Transverse colon (tissue), 4 donors: ENCODE measurements at regions of chr6 and their contacts with region 1.

Region 1: GRCh38 chr6:127464881-127465459 is 5.8 kb upstream of the KIAA0408 start:
- DNase-seq: peak; percentile 68
- H3K4me3 ChIP-seq: no peak overlapping the region
- H3K27ac ChIP-seq: peak overlapping the region in 3 of 4 donors; percentile 51 to 73 (median 70)
- H3K4me1 ChIP-seq: peaks cover 0 to 12% (median 0%) of the 10 kb centered on the region in 4 donors
- H3K27me3 ChIP-seq: no peaks in the 10 kb centered on the region
- CTCF ChIP-seq: peak; percentile 67 to 80 (median 78)
- EP300 ChIP-seq: no peak
- POLR2A ChIP-seq: no peak

Region 2: DNA sequence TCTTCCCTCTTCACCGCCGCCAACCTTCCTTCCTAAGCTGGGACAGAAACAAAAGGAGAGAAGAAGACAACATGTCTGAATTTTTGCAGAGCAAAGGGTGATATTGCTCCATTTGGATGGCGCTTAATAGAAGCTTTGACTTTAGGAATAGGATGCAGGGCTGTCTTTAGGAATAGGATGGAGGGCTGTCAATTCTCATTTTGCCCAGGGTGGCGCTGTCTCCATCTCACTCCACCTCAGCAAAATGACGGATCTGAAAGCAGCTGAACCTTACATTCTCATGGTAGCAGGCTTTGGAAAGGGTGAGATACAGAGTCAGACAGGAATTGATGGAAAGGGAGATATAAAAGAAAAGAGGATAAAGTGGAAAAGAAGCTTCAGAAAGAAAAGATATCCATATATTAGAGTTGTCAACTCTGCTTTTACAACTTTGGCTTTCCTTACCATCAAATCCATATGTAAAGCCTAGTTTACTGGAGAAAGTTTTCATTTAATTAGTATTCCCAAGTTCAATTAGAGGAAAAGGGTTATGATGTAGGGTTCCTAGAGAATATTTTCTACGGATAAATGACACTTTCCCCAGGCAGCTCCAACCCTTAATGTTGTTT is 51.8 kb after region 1 on chr6:
- in situ Hi-C with region 1: no loop called
- intact Hi-C with region 1: loop called (anchors 10 kb)
- DNase-seq: peak; percentile 20
- H3K4me3 ChIP-seq: peak overlapping the region; percentile 46 to 76 (median 50)
- H3K27ac ChIP-seq: peak overlapping the region in 1 of 4 donors; percentile 32
- H3K4me1 ChIP-seq: peaks cover 5 to 40% (median 22%) of the 10 kb centered on the region in 4 donors
- H3K27me3 ChIP-seq: peaks cover 87% of the 10 kb centered on the region
- CTCF ChIP-seq: peak; percentile 48 to 61 (median 57)
- EP300 ChIP-seq: no peak
- POLR2A ChIP-seq: no peak

Region 3: DNA sequence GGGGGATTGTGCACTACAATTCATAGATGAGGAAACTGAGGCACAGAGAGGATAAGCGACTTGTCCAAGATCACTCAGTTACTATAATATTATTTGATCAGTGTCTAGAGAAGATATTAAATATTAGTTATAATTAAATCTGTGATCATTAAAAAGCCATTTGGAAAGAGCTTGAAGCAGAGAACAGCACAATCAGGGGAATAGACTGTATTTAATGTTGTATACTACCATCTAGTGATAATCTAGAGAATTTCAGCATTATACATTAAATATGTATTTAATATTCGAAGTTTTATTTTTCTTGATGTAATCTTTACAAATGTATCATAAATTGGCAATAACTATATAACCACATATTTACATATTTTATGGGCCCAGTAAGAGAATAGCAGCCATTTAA is 74.3 kb after region 1 on chr6:
- in situ Hi-C with region 1: loop called in 1 of 4 experiments (anchors 5 kb)
- intact Hi-C with region 1: no loop called
- DNase-seq: no peak
- H3K4me3 ChIP-seq: no peak overlapping the region
- H3K27ac ChIP-seq: no peak overlapping the region
- H3K4me1 ChIP-seq: no peaks in the 10 kb centered on the region
- H3K27me3 ChIP-seq: no peaks in the 10 kb centered on the region
- CTCF ChIP-seq: peak; percentile 35 to 43 (median 37)
- EP300 ChIP-seq: no peak
- POLR2A ChIP-seq: no peak

Region 4: DNA sequence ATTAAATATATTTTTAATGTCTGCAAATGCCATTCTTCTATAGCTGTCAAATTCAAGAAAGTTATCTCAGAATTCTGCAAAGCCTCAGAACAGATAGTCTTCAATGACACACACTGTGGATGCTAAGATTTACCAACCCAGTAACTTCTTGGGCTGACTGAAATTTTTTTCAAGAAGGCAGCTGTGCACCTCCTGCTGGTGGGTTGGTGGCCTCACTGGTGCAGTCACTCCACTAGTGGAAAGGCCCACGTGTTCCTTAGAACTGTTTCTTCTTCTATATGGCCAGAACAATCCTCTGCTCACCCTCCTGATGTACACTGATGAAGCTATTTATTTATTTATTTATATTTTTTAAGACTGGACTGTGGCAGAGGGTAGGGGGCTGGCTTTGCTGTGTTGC is 82.2 kb after region 1 on chr6:
- in situ Hi-C with region 1: loop called in 1 of 4 experiments (anchors 5 kb)
- intact Hi-C with region 1: no loop called
- DNase-seq: no peak
- H3K4me3 ChIP-seq: no peak overlapping the region
- H3K27ac ChIP-seq: no peak overlapping the region
- H3K4me1 ChIP-seq: no peaks in the 10 kb centered on the region
- H3K27me3 ChIP-seq: peaks cover 3% of the 10 kb centered on the region
- CTCF ChIP-seq: no peak
- EP300 ChIP-seq: no peak
- POLR2A ChIP-seq: no peak